Ascending aorta (tissue), 2 donors: ENCODE measurements at regions of chr2 and their contacts with region 1.

Region 1: GRCh38 chr2:108533832-108534583 is at the start of gene LIMS1:
- DNase-seq: peak; percentile 73 to 95
- H3K4me3 ChIP-seq: peak within 1 kb of the TSS; percentile 84 to 88
- H3K27ac ChIP-seq: peak within 1 kb of the TSS; percentile 84 to 91
- H3K4me1 ChIP-seq: peaks cover 0 to 17% of the 10 kb centered on the region in 2 donors
- H3K27me3 ChIP-seq: no peaks in the 10 kb centered on the region
- CTCF ChIP-seq: no peak
- total RNA-seq, gene LIMS1: 39.8 TPM

Region 2: DNA sequence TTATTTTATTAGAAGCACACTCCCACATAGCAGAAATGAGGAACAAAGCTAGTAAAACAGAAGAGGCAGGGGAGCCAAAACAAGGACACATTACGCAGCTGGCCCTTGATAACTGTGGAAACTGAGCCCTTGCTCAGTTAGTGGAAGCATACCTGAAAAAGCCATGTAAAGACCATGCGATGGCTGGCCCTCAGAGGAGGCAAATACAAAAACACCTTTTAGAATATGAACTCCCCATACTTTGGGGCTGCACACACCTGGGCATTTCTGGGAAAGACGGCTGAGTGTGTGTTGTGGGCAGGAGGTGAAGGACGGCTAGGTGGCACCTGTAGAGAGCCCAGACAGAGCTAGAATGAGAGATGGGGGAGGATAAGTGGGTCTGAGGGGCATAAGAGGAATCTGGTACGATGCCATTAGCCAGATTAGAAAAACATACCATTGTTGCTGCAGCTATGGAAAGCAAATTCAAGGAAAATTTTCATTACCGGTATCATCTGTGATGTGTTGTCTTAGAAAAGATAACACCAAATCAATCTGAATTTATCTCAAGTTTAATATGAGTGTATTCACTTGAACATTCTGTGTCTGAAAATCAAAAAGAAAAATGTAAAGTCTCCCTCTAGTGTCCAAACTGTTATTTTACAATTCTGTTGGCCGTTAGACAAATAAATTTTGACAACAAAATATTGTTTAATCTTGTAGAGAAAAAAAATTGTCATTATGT is 339.4 kb before region 1 on chr2:
- intact Hi-C with region 1: no loop called
- DNase-seq: no peak
- H3K4me3 ChIP-seq: no peak overlapping the region
- H3K27ac ChIP-seq: no peak overlapping the region
- H3K4me1 ChIP-seq: no peaks in the 10 kb centered on the region
- H3K27me3 ChIP-seq: no peaks in the 10 kb centered on the region
- CTCF ChIP-seq: peak in 2 of 3 experiments; percentile 37 to 49

Region 3: GRCh38 chr2:108448678-108449493 is 85.1 kb before region 1 on chr2 and contains the start of gene GCC2:
- intact Hi-C with region 1: loop called (anchors 2 kb)
- DNase-seq: peak; percentile 79 to 97
- H3K4me3 ChIP-seq: peak within 1 kb of the TSS; percentile 56 to 77
- H3K27ac ChIP-seq: peak within 1 kb of the TSS; percentile 79 to 88
- H3K4me1 ChIP-seq: peaks cover 0 to 3% of the 10 kb centered on the region in 2 donors
- H3K27me3 ChIP-seq: no peaks in the 10 kb centered on the region
- CTCF ChIP-seq: no peak
- total RNA-seq, gene GCC2: 7.6 TPM

Region 4: DNA sequence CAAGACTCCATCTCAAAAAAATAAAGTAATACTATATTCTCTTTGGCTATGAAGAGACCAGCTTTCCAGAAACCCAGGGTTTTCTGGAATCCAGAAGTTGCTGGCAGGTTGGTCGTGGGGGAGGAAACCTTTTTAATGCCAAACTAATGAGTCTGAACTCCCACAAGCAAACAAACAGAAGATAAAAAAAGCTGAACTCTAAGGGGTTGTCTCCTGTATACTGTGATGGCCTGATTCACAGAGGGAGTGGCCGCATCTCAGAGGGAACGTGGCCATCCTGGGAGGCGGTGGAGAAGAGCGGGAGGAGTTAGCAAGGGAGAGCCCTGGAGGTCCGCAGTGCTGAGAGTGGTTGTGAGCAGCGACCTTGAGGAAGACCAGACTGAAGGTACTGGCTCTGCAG is 36.4 kb after region 1 on chr2:
- intact Hi-C with region 1: loop called (anchors 5 kb)
- DNase-seq: no peak
- H3K4me3 ChIP-seq: no peak overlapping the region
- H3K27ac ChIP-seq: no peak overlapping the region
- H3K4me1 ChIP-seq: peaks cover 0 to 20% of the 10 kb centered on the region in 2 donors
- H3K27me3 ChIP-seq: no peaks in the 10 kb centered on the region
- CTCF ChIP-seq: no peak